ENCODE measurements at regions of chr5 and their contacts with region 1.

Region 1: DNA sequence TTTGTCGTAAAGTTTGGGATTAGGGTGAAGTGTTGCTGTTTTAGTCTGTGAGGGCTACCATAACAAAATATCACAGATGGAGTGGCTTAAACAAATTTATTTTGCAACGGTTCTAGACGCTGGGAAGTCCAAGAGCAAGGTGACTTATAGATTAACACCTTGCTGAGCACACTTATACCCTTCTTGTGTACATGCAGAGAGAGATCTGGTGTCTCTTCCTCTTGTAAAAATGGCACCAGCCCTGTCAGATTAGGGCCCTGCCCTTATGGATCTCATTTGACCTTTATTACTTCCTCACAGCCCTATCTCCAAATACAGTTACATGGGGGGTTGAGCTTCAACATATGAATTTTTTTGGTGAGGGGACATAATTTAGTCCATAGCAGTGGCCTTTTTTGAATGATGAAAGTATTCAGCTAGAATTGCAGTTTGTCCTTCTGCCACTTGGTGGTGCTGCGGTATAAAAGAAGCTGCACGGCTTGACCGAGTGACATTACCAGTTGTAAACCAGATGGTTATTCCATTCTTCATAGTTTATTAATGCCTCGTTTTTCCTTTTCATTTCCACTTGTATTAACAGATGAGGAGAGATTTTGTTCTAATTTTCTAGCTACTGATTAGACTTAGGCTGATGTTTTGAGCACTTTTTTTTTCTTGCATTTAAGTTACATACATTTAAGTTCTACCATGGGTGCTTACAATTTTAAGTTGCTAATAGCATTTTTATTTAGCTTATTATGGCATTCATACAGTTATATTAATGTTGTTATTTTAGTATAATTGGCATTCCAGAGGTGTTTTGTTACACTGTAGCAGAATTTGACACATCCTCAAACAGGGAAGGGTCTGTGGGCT is 19.4 kb downstream of the DCP2 start:
- DNase-seq: peak; percentile 84
- H3K4me3 ChIP-seq: no peak overlapping the region
- H3K27ac ChIP-seq: no peak overlapping the region
- H3K4me1 ChIP-seq: no peaks in the 10 kb centered on the region
- H3K27me3 ChIP-seq: no peaks in the 10 kb centered on the region
- CTCF ChIP-seq: peak; percentile 74

Region 2: DNA sequence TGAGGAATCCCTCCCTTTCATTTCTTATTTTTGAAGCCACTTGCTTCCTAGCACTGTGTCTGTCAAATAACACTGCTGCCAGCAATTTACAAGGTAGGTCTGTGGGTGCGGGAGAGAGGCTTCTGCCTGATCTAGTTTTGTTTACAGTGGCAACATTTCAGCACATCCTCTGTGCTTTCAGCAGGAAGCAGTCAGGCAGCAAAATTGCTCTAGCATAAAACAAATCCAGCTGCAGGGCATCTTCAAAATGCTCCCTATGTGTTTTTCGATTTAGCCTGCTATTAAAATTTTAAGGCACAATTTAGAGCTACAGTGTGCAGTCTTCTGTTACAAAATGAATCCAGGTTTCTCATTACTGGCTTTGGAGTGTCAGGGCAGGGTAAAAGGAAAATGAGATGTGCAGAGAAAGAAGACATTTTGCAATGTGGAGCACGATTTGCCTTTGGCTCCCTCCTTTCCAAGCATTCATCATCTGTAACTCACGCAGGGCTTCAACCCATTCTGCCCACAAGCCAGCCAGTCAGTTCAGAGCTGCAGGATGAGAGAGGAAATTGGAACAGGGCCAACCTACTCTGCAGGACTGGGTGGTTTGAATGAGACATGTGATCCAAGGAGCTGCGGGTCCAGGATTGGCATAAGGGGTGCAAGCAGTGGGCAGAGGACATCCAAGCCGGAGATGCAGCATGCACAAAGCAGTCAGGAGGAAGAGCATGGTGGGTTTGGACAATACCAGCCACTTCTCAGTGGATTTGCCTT is 401.7 kb before region 1 on chr5:
- intact Hi-C with region 1: no loop called
- DNase-seq: no peak
- H3K4me3 ChIP-seq: no peak overlapping the region
- H3K27ac ChIP-seq: no peak overlapping the region
- H3K4me1 ChIP-seq: no peaks in the 10 kb centered on the region
- H3K27me3 ChIP-seq: no peaks in the 10 kb centered on the region
- CTCF ChIP-seq: no peak

Region 3: DNA sequence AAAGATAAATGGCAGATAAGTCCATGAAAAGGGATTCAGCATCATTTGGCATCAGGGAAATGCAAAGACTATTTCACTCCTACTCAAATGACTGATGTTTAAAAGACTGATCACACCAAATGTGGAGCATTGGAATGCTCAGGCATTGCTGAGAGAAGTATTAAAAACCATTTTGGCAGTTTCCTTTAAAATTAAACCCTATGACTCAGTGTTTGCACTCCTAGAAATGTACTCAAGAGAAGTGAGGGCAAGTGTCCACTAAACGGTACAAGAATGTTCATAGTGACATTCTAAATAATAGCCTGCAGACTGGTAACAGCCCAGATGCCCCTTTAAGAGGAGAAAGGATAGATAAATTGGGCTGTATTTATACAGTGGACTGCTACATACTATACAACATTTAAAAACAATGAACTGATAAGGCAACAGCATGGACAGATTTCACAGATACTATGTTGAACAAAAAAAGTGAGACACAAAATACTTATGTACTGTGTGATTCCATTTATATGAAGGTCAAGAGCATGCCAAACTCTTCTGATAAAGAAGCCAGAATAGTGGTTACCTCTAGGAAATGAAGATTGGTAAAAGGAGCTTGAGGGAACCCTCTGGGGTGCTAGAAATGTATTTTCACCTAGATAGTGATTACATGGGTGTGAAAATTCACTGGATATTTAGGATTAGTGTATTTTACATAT is 233.7 kb before region 1 on chr5:
- intact Hi-C with region 1: no loop called
- DNase-seq: no peak
- H3K4me3 ChIP-seq: no peak overlapping the region
- H3K27ac ChIP-seq: no peak overlapping the region
- H3K4me1 ChIP-seq: no peaks in the 10 kb centered on the region
- H3K27me3 ChIP-seq: no peaks in the 10 kb centered on the region
- CTCF ChIP-seq: no peak

Region 4: DNA sequence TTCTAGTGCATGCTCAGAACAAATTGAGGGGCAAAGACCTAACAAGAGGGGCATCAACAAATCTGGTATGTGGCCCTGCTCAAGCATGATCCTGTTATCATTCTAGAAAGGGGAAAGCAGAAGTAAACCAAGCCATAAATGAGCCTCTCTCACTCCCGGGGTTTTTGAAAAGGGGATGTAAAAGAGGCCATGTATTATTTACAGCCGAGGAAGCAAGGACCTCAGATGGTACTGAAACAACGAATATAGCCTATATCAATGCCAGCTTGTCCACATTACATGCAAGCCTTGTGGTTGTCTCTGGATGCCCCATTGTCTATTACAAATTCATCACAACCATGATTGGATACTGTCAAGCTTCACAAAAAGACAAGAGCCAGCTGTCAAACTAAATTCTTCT is 191.9 kb after region 1 on chr5:
- intact Hi-C with region 1: no loop called
- DNase-seq: no peak
- H3K4me3 ChIP-seq: no peak overlapping the region
- H3K27ac ChIP-seq: no peak overlapping the region
- H3K4me1 ChIP-seq: no peaks in the 10 kb centered on the region
- H3K27me3 ChIP-seq: no peaks in the 10 kb centered on the region
- CTCF ChIP-seq: no peak

Region 5: DNA sequence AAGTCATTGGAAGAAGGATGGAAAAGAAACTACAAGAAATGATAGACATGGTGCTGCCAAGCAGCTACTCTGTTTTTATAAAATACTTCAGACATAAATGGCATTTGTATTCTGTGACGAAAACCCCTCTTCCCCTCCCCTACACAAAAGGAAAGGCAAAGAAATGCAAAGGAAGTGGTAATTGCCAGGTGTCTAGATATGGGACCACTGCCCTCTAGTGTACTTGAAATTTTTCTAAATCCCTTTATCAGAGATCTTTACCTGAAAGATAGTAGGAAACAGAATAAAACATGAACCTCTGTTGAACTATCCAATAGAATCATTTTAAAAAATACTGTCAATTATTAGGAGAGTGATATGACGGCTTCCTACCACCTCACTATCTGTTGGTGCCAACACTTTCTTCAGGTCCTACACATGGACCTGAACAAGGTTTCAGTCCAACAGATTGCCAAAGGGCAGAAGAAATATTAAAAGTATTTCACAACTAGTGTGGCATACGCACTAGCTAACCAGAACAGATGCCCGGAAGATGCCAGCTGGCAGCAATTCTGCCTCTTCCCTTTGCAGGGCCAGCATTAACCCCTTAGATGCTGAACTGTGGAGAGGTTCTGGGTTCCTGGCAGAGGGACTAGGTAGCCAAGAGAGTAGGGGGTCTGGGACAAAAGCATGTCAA is 334.7 kb after region 1 on chr5:
- intact Hi-C with region 1: loop called (anchors 10 kb)
- DNase-seq: no peak
- H3K4me3 ChIP-seq: no peak overlapping the region
- H3K27ac ChIP-seq: no peak overlapping the region
- H3K4me1 ChIP-seq: no peaks in the 10 kb centered on the region
- H3K27me3 ChIP-seq: no peaks in the 10 kb centered on the region
- CTCF ChIP-seq: no peak

Region 6: GRCh38 chr5:113513384-113514288 is 517.6 kb after region 1 on chr5 and contains the start of gene YTHDC2:
- intact Hi-C with region 1: loop called (anchors 10 kb)
- DNase-seq: peak; percentile 83
- H3K4me3 ChIP-seq: peak within 1 kb of the TSS; percentile 96
- H3K27ac ChIP-seq: peak within 1 kb of the TSS; percentile 82
- H3K4me1 ChIP-seq: no peaks in the 10 kb centered on the region
- H3K27me3 ChIP-seq: no peaks in the 10 kb centered on the region
- CTCF ChIP-seq: no peak
- total RNA-seq, gene YTHDC2: 22.6 to 22.8 TPM

Region 7: DNA sequence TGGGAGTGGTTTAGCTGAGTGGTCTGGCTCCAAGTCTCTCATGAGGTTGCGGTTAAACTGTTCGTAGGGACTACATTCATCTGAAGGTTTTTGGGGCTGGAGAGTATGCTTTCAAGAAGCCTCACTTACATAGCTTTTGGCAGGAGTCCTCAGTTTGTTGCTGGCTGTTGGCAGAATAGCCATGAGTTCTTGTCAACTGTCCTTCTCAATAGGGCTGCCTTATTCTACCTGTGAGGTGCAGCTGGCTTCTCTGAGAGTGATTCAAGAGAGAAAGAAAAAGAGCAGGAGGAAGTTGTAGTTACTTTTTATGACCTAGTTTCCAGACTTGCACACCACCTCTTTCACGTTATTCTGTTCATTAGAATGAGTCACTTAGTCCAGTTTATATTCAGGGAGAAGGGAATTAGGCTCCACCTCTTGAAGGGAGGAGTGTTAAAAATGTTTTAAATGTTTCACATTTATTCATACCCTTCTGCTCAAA is 550.8 kb after region 1 on chr5:
- intact Hi-C with region 1: no loop called
- DNase-seq: no peak
- H3K4me3 ChIP-seq: no peak overlapping the region
- H3K27ac ChIP-seq: no peak overlapping the region
- H3K4me1 ChIP-seq: no peaks in the 10 kb centered on the region
- H3K27me3 ChIP-seq: no peaks in the 10 kb centered on the region
- CTCF ChIP-seq: no peak

Region 8: DNA sequence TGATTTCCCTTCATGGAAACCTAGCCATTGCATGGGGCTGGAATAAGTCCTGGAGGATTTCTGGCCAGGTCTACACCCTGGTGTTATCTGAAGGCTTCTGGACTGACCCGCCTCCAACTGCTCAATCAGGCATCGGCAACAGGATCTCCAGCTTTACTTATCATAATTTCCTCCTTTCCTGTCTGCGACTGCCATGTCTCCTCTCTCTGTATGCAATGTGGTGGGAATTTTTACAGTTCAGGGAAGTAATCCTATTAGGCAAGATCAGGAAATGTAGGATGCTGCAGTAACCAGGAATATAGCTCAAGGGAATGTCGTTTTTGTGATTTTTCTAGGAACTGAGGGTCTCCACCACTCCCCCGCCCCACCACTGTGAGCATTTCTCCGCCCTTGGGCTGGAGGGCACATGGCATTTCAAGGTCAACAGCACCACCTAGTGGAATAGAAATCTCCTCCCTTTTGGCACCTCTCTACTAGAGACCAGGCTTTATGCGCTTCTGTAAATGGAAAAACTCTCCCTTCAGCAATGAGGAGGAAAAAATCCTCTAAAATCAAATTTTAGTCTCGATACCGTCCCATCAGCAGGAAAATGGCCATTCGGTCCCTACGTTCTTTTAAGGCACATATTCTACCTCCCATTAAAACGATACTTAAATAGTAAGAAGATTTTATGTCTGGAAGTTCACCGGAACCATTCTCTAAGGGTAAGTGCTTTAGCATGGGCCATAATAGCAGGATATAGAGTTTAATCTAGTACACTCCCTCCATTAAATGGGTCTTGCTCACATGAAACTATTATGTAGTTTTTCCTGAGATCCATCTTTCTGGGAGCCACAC is 610.5 kb after region 1 on chr5:
- intact Hi-C with region 1: loop called (anchors 5 kb)
- DNase-seq: peak; percentile 33
- H3K4me3 ChIP-seq: no peak overlapping the region
- H3K27ac ChIP-seq: no peak overlapping the region
- H3K4me1 ChIP-seq: no peaks in the 10 kb centered on the region
- H3K27me3 ChIP-seq: no peaks in the 10 kb centered on the region
- CTCF ChIP-seq: peak; percentile 52